Activated CD8-positive, alpha-beta T cell treated with anti-CD3 and anti-CD28 coated beads for 36 hours (primary cell): ENCODE measurements at regions of chr17 and their contacts with region 1.

Region 1: GRCh38 chr17:20043021-20043420 is 33.9 kb downstream of the SPECC1 start:
- DNase-seq: peak; percentile 65
- ATAC-seq: peak; percentile 68
- H3K4me3 Mint-ChIP-seq: no peak overlapping the region
- H3K27ac Mint-ChIP-seq: peak overlapping the region; percentile 47
- H3K4me1 Mint-ChIP-seq: peaks cover 12% of the 10 kb centered on the region
- H3K27me3 Mint-ChIP-seq: no peaks in the 10 kb centered on the region
- CTCF ChIP-seq: no peak

Region 2: DNA sequence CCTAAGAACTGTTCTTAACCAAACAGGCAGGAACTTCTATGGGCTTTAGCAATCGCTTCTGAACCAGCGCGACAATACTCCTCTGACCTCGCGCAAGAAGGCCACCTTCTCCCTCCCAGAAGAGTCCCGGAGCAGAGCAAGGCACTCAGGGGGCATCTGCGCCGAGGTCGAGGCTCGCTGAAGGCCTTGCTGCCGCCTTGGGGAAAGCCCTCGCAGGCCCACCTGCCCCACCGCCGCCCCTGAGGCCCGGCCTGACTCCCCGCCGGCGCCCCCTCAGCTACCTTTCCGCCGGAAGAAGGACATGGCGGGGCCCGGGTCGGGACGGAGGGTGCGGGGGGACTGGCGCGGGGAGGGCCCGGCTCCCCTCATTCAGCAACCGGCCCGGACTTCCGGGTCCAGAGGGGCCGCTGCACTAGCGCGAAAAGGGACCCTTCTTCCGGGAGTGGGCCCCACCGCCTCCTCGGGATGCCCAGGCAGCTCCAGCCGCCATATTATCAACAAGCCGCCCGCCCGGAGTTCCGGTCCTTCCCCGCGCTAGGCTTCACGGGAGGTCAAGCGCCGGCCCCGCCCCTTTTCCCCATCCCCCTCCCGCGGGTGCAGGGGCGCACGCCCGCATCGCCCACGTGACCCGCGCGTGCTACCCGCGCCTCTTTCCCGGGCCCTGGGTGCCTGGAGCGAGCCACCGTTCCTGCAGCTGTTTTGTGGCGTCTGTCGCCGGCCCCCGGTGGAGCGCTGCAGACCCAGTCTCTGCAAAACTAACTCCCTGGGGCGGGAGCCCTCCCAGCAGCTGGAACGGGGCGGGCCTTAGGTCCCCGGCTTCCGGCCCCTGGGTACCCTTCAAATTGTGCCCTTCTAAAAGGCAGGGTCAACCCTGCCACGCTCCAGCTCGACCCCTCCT is 65.5 kb before region 1 on chr17 and contains the start of gene AKAP10:
- CTCF ChIA-PET with region 1: no interaction called
- POLR2A ChIA-PET with region 1: no interaction called
- intact Hi-C with region 1: loop called (anchors 10 kb)
- DNase-seq: peak; percentile 97
- ATAC-seq: peak; percentile 88
- H3K4me3 Mint-ChIP-seq: peak within 1 kb of the TSS; percentile 91
- H3K27ac Mint-ChIP-seq: peak within 1 kb of the TSS; percentile 98
- H3K4me1 Mint-ChIP-seq: peaks cover 47% of the 10 kb centered on the region
- H3K27me3 Mint-ChIP-seq: no peaks in the 10 kb centered on the region
- CTCF ChIP-seq: no peak
- total RNA-seq, gene AKAP10: 38.6 to 39.2 TPM

Region 3: GRCh38 chr17:20028443-20028842 is 14.6 kb before region 1 on chr17:
- CTCF ChIA-PET with region 1: no interaction called
- POLR2A ChIA-PET with region 1: no interaction called
- intact Hi-C with region 1: no loop called
- DNase-seq: no peak
- ATAC-seq: no peak
- H3K4me3 Mint-ChIP-seq: no peak overlapping the region
- H3K27ac Mint-ChIP-seq: no peak overlapping the region
- H3K4me1 Mint-ChIP-seq: peaks cover 10% of the 10 kb centered on the region
- H3K27me3 Mint-ChIP-seq: peaks cover 2% of the 10 kb centered on the region
- CTCF ChIP-seq: no peak